A549 (cell line): ENCODE measurements at regions of chr3 and their contacts with region 1.

Region 1: DNA sequence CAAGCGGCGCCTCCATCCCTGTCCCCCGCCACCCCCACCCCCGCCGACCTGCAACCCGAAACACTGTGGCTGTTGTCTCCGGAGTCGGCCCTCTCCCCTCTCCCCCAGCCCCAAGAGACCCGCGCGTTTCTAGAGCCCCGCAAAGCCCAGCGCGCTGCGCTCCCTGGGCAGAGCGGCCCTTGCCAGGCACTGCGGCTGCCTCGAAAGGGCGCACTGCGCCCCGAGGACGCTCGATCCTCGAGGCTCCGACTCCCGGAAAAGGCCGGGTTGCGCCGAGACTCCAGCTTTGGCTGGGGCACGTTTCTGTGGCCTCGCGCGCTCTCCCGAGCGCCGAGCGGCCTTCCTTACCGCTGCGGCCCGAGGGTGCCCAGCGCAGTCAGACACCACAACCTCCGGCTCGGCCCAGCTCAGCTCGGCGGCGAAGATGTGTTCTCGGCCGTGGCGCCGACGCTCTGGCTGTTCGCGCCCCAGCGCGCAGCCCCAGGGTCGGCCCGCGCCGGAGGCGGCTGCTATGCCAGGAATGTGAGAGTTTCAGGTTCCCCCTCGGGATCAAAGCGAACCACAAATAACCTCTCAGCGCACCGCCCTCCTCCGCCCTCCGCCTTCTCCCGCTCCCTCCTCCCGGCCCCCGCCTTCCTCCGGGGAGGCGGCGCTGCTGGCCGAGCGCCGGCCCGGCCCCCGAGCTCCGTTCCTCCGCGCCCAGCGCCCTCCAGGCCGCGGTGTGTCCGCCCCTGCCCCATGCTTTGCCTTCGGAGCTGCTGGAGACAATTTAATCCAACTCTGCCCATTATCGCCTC is at the start of gene AMOTL2:
- DNase-seq: peak; percentile 90 to 93
- ATAC-seq: peak; percentile 79 to 80
- H3K4me3 ChIP-seq: peak within 1 kb of the TSS; percentile 74
- H3K27ac ChIP-seq: peak within 1 kb of the TSS; percentile 99 to 100
- H3K4me1 ChIP-seq: peaks cover 67% of the 10 kb centered on the region
- CTCF ChIP-seq: no peak
- EP300 ChIP-seq: peak in 1 of 2 experiments; percentile 63; a peak in 1 of 5 replicates
- POLR2A ChIP-seq: peak; percentile 63
- RAD21 ChIP-seq: no peak
- polyA plus RNA-seq, gene AMOTL2: 36.3 and 44.1 TPM in 2 replicates

Region 2: DNA sequence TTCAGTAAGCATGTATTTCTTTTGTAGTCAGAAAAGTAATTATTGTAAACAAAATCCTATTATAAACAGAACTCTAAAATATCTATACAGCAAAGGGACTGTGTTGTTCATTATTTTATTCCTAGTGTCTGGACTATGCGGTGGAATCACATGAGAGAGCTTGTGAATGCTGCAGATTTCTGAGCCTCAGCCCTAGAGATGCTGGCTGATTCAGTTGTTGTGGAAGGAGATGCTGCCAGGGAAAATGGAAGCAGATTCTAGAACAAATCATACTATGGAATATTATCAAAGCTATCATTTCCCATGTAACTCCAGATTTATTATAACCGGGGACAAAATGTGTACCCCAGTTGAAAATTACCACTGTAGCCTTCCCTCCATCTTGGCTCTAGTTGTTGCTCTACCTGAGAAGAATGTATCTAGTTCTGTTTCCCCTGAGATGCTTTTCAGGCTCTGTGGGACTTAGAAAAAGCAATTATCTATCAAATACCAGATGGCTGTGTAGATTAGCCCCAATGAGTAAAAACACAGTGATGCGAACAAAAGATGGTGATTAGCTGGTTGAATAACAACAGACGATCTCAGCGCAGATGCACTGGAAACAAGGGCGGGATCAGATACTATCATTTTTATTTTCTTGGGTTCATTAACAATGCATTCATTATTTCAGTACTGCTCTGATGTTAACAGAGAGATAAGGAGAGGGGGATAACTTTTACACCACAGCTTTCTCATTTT is 1204.7 kb before region 1 on chr3:
- CTCF ChIA-PET with region 1: no interaction called
- POLR2A ChIA-PET with region 1: no interaction called
- DNase-seq: no peak
- ATAC-seq: no peak
- H3K4me3 ChIP-seq: no peak overlapping the region
- H3K27ac ChIP-seq: no peak overlapping the region
- H3K4me1 ChIP-seq: no peaks in the 10 kb centered on the region
- CTCF ChIP-seq: no peak
- EP300 ChIP-seq: no peak
- POLR2A ChIP-seq: no peak
- RAD21 ChIP-seq: no peak

Region 3: GRCh38 chr3:134326760-134327593 is 47.2 kb before region 1 on chr3:
- CTCF ChIA-PET with region 1: no interaction called
- POLR2A ChIA-PET with region 1: interaction called, 14 read pairs
- DNase-seq: peak in 1 of 2 experiments; percentile 94
- ATAC-seq: peak; percentile 82 to 85
- H3K4me3 ChIP-seq: peak overlapping the region; percentile 26
- H3K27ac ChIP-seq: peak overlapping the region; percentile 96 to 100
- H3K4me1 ChIP-seq: peaks cover 76% of the 10 kb centered on the region
- CTCF ChIP-seq: no peak
- EP300 ChIP-seq: peak; percentile 94 to 99; a peak in 4 of 5 replicates
- POLR2A ChIP-seq: no peak
- RAD21 ChIP-seq: peak; percentile 30 to 56; a peak in 3 of 5 replicates

Region 4: DNA sequence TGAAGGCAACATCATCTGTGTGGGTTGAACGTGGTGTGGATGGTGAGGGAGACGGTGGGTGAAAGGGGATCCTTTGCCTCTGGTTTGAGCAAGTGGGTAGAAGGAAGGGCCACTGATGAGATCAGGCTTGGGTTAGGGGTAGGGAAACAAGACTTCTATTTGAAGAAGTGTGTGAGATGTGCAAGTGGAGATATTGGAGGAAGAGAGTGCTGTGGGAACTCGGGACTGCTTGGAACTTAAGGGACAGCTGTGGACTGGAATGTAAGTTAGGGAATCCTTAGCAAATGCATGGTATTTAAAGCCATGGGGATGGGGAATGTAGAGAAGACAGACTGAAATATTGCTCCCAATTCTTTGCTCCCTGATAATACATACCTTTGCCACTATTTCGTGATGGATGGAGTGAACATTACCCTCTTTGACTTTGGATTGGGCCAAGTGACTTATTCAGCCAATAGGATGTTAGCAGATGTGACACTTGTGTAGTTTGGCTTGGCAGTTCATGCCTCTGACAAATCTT is 30.2 kb after region 1 on chr3:
- CTCF ChIA-PET with region 1: no interaction called
- POLR2A ChIA-PET with region 1: no interaction called
- DNase-seq: no peak
- ATAC-seq: no peak
- H3K4me3 ChIP-seq: no peak overlapping the region
- H3K27ac ChIP-seq: no peak overlapping the region
- H3K4me1 ChIP-seq: no peaks in the 10 kb centered on the region
- CTCF ChIP-seq: no peak
- EP300 ChIP-seq: no peak
- POLR2A ChIP-seq: no peak
- RAD21 ChIP-seq: no peak

Region 5: DNA sequence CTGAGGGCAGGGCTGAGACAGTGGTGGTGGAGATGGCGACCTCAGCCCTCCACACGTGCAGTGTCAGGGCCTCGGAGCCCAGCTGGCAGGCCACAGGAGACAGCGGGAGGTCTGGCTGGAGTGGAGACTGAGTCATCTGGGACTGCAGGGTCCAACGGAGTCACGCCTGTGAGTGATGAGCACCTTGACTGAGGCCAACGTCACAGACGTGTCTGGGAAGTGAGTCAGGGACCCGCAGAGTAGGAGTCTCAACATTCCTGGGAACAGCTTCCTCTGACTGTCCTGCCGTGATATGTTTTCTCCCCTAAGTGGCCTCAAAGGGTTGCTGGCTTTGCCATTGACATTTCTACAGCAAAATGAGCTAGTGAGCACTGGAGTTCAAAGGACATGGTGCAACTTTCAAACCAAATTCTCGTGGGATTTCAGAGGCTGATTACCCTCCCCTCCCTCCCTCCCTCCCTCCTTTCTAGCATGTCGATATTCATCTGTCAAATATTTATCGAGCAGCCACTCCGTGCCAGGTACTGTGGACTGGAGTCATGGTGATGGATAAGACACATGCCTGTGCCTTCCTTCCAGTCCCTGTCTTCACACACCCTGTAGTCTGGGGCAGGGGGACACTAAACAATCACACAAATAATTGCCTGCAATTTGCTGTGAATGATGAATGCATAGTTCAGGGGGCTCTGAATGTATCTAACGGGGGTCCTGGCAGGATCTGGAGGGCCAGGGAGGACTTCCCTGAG is 53.4 kb after region 1 on chr3:
- CTCF ChIA-PET with region 1: interaction called, 4 read pairs
- POLR2A ChIA-PET with region 1: interaction called, 13 read pairs
- DNase-seq: peak; percentile 70 to 94
- ATAC-seq: peak; percentile 95
- H3K4me3 ChIP-seq: no peak overlapping the region
- H3K27ac ChIP-seq: peak overlapping the region; percentile 87 to 89
- H3K4me1 ChIP-seq: peaks cover 43% of the 10 kb centered on the region
- CTCF ChIP-seq: no peak
- EP300 ChIP-seq: peak; percentile 84 to 91; a peak in 4 of 5 replicates
- POLR2A ChIP-seq: no peak
- RAD21 ChIP-seq: peak; percentile 18 to 36; a peak in 1 of 5 replicates

Region 6: GRCh38 chr3:134485718-134486576 is 111.8 kb after region 1 on chr3 and contains the starts of genes ANAPC13 and CEP63:
- CTCF ChIA-PET with region 1: interaction called, 240 read pairs
- POLR2A ChIA-PET with region 1: interaction called, 3 read pairs
- DNase-seq: peak; percentile 87 to 98
- ATAC-seq: peak; percentile 91 to 93
- H3K4me3 ChIP-seq: peak within 1 kb of the TSS; percentile 84
- H3K27ac ChIP-seq: peak within 1 kb of the TSS; percentile 95 to 99
- H3K4me1 ChIP-seq: peaks cover 21% of the 10 kb centered on the region
- CTCF ChIP-seq: no peak
- EP300 ChIP-seq: no peak
- POLR2A ChIP-seq: peak; percentile 47; the same call in 1 of the 2 replicates
- RAD21 ChIP-seq: no peak
- polyA plus RNA-seq, gene ANAPC13: 92.0 and 109 TPM in 2 replicates
- polyA plus RNA-seq, gene CEP63: 14.0 and 24.0 TPM in 2 replicates